ENCODE measurements at regions of chr5 and their contacts with region 1.

Region 1: DNA sequence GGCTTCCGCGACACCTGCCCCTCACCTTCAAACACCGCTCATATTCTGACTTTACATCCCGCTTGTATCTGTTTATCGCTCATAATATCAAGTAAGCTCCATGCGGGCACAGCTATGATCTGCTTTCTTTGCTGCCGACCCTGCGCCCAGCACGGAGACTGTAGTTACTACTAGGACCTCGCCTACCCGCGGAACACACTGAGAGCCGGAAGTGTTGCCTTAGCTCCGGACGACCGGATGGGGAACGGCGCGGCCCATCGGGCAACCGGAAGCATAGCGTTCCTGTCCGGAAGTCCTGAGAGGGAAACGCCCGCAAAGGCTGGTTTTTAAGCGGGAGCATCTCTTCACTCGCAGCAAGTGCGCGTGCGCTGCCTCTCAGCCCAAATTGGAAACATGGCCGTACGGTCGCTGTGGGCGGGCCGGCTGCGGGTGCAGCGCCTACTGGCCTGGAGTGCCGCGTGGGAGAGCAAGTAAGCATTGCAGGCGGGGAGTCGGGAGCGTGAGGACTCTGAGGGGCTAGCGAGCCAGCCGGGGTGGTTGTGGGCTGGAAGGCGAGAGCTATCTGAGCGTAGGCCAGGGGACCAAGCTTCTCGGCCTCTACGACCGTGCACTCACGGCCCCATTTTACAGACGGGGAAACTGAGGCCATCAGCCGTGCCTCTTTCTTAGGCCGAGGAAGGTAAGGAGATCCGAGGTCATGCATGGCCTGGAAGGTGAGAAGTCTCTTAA is at the start of gene GRPEL2:
- H3K4me3 ChIP-seq: peak within 1 kb of the TSS; percentile 94
- H3K27ac ChIP-seq: peak within 1 kb of the TSS; percentile 67
- H3K4me1 ChIP-seq: no peaks in the 10 kb centered on the region
- CTCF ChIP-seq: no peak

Region 2: GRCh38 chr5:149357370-149358293 is 12.3 kb after region 1 on chr5 and contains the start of gene PCYOX1L:
- CTCF ChIA-PET with region 1: interaction called, 6 read pairs
- POLR2A ChIA-PET with region 1: interaction called, 77 read pairs
- H3K4me3 ChIP-seq: peak within 1 kb of the TSS; percentile 78
- H3K27ac ChIP-seq: peak within 1 kb of the TSS; percentile 61; the same call in 1 of the 2 replicates
- H3K4me1 ChIP-seq: no peaks in the 10 kb centered on the region
- CTCF ChIP-seq: no peak

Measured in HEK293 (cell line).